Psoas muscle (tissue), 8 donors: ENCODE measurements at regions of chr11 and their contacts with region 1.

Region 1: GRCh38 chr11:93741094-93741881 is at the starts of genes C11orf54 and TAF1D:
- DNase-seq: peak; percentile 97 to 99
- ATAC-seq: peak; percentile 94 to 96 (median 96)
- H3K4me3 ChIP-seq: peak within 1 kb of the TSS; percentile 88
- H3K27ac ChIP-seq: peak within 1 kb of the TSS; percentile 95
- H3K4me1 ChIP-seq: peaks cover 40% of the 10 kb centered on the region
- H3K27me3 ChIP-seq: no peaks in the 10 kb centered on the region
- CTCF ChIP-seq: no peak
- total RNA-seq, gene C11orf54: 20.6 to 37.0 (median 27.4) TPM
- total RNA-seq, gene TAF1D: 53.7 to 84.7 (median 79.2) TPM

Region 2: GRCh38 chr11:93672280-93672679 is 69.0 kb before region 1 on chr11:
- intact Hi-C with region 1: loop called in 1 of 2 experiments (anchors 10 kb)
- DNase-seq: no peak
- ATAC-seq: no peak
- H3K4me3 ChIP-seq: no peak overlapping the region
- H3K27ac ChIP-seq: no peak overlapping the region
- H3K4me1 ChIP-seq: no peaks in the 10 kb centered on the region
- H3K27me3 ChIP-seq: no peaks in the 10 kb centered on the region
- CTCF ChIP-seq: no peak

Region 3: DNA sequence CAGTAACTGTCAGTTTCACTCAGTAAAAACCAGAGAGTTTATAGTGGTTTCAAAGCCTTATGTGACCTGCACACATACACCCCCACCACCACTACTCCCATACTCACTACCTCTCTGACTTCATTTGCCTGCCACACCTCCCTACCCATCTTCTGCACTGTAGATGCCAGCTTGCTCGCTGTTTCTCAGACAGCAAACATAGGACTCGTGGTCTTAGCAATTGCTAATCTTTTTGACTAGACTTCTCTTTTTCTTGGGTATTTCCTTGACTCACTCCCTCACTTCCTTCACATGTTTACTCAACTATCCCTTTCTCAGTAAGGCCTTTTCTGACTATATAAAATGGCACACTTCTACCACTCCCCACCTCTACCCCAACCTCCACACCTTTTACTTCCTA is 52.0 kb before region 1 on chr11:
- intact Hi-C with region 1: loop called in 1 of 2 experiments (anchors 10 kb)
- DNase-seq: no peak
- ATAC-seq: no peak
- H3K4me3 ChIP-seq: no peak overlapping the region
- H3K27ac ChIP-seq: no peak overlapping the region
- H3K4me1 ChIP-seq: no peaks in the 10 kb centered on the region
- H3K27me3 ChIP-seq: no peaks in the 10 kb centered on the region
- CTCF ChIP-seq: no peak

Region 4: DNA sequence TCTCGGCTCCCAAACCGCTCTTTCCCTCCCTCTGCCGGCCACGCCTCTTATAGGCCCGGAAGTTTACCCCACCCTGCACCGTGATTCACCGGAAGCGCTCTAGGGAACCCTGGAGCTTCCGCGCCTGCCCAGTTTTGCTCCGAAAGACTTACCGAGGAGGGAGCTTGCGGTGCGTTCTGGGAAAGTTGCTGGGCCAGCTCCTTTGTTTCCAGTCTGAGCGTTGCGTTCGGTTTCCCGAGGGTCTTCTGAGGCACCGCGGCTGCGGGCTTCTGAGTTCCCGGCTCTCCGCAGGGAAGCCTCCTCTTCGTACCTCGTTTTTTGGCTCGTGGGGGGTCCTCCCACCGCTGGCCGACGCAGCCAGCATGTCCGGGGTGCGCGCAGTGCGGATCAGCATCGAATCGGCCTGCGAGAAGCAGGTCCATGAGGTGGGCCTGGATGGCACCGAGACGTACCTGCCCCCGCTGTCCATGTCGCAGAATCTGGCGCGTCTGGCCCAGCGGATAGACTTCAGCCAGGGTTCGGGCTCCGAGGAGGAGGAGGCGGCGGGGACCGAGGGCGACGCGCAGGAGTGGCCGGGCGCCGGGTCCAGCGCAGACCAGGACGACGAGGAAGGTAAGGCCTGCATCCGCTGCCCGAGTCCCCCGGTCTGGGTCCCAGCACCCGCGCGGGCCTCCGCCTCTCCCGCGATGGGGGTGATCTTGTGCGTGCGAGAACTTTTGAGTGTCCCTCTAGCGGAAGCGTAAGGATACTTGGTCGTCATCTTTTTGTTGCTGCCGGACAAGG is 43.1 kb after region 1 on chr11 and contains the start of gene MED17:
- intact Hi-C with region 1: loop called (anchors 2 to 5 kb)
- DNase-seq: peak; percentile 91 to 95
- ATAC-seq: peak; percentile 99 to 100 (median 100)
- H3K4me3 ChIP-seq: peak within 1 kb of the TSS; percentile 94
- H3K27ac ChIP-seq: peak within 1 kb of the TSS; percentile 88
- H3K4me1 ChIP-seq: peaks cover 33% of the 10 kb centered on the region
- H3K27me3 ChIP-seq: no peaks in the 10 kb centered on the region
- CTCF ChIP-seq: peak; percentile 41
- total RNA-seq, gene MED17: 10.6 to 16.0 (median 13.0) TPM